PC-3 (cell line): ENCODE measurements at regions of chrX and their contacts with region 1.

Region 1: DNA sequence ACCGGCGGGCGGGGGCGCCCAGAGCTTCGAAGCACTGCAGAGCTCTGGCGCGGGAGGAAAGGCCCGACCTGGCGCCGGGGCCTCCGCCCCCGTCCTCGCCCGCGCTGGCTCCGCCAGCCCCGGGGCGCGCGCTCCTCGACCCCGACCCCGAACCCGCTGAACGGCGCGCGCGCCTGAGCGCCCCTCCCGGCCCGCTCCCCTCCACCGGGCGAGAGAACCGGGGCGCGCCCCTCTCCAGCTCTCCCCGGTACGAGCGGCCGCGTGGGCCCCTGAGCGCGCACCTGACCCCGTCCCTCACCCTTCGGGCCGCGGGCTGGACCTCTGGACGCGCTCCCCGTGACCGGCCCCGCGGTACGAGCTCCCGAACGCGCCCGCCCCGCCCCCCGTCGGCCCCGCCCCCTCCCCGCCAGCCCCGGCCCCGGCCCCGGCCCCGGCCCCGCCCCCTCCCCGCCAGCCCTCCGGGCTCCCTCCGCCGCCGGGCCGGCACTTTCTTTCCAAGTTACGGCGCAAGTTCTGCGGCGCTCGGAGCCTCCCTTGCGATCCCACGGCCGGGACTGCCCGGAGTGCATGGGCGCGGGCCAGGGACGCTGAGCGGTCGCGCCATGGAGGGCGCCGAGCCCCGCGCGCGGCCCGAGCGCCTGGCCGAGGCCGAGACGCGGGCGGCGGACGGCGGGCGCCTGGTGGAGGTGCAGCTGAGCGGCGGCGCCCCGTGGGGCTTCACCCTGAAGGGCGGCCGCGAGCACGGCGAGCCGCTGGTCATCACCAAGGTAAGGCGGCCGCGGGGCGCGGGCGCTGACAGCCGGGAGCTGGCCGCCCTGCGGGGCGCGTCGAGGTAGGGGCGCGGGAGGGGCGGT is at the start of gene SHROOM2:
- DNase-seq: peak; percentile 23
- ATAC-seq: peak; percentile 45
- H3K4me3 ChIP-seq: peak within 1 kb of the TSS; percentile 95
- H3K27ac ChIP-seq: no peak within 1 kb of the TSS
- H3K4me1 ChIP-seq: peaks cover 33% of the 10 kb centered on the region
- H3K27me3 ChIP-seq: no peaks in the 10 kb centered on the region
- CTCF ChIP-seq: no peak
- total RNA-seq, gene SHROOM2: 6.5 and 8.6 TPM in 2 replicates

Region 2: DNA sequence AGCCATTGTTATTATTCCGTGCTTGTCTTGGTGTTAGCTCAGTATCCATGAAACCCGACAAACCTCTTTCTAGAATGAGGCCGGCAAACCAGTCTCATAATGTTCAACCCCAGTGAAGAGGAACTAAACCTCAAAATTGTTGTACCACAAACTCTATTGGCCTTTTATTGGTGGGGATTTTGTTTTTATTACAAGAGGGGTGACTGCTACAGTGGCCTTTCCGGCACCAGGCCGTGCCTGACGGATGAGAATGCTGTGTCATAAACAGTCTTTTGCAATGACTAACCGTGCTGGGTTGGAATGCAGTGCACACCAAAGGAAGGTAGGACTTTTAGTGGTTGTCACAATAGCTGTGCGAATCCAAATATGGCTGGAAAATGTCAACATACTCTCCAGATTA is 60.9 kb after region 1 on chrX:
- CTCF ChIA-PET with region 1: no interaction called
- POLR2A ChIA-PET with region 1: no interaction called
- intact Hi-C with region 1: loop called (anchors 10 kb)
- DNase-seq: peak; percentile 90
- ATAC-seq: peak; percentile 99
- H3K4me3 ChIP-seq: no peak overlapping the region
- H3K27ac ChIP-seq: peak overlapping the region; percentile 73
- H3K4me1 ChIP-seq: peaks cover 15% of the 10 kb centered on the region
- H3K27me3 ChIP-seq: no peaks in the 10 kb centered on the region
- CTCF ChIP-seq: no peak